ENCODE measurements at regions of chr2 and their contacts with region 1.

Region 1: GRCh38 chr2:64052468-64053241 is 33.4 kb upstream of the VPS54 start:
- DNase-seq: no peak
- H3K4me3 Mint-ChIP-seq: no peak overlapping the region
- H3K27ac Mint-ChIP-seq: no peak overlapping the region
- H3K4me1 Mint-ChIP-seq: peaks cover 40% of the 10 kb centered on the region
- H3K27me3 Mint-ChIP-seq: no peaks in the 10 kb centered on the region

Region 2: DNA sequence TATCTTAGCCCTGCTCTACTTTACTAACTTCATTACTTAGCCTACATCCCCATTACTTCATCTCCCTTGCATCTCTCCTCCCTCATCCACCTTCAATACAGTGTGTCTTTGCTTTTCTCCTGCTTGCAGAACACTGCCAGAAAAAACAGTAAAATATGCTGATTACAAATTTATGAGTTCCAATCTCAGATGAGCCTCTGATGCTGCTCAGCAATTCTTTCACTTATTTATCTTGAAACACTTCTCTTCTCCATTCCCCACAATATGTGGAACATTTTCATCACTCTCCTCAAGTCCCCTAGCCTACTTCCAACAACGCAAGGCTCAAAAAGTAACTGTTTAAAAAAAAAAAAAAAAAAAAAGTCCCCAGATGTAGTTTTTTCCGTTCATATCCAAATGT is 40.5 kb before region 1 on chr2:
- intact Hi-C with region 1: no loop called
- DNase-seq: no peak
- H3K4me3 Mint-ChIP-seq: peak overlapping the region; percentile 23
- H3K27ac Mint-ChIP-seq: peak overlapping the region; percentile 80
- H3K4me1 Mint-ChIP-seq: peaks cover 44% of the 10 kb centered on the region
- H3K27me3 Mint-ChIP-seq: no peaks in the 10 kb centered on the region

Region 3: DNA sequence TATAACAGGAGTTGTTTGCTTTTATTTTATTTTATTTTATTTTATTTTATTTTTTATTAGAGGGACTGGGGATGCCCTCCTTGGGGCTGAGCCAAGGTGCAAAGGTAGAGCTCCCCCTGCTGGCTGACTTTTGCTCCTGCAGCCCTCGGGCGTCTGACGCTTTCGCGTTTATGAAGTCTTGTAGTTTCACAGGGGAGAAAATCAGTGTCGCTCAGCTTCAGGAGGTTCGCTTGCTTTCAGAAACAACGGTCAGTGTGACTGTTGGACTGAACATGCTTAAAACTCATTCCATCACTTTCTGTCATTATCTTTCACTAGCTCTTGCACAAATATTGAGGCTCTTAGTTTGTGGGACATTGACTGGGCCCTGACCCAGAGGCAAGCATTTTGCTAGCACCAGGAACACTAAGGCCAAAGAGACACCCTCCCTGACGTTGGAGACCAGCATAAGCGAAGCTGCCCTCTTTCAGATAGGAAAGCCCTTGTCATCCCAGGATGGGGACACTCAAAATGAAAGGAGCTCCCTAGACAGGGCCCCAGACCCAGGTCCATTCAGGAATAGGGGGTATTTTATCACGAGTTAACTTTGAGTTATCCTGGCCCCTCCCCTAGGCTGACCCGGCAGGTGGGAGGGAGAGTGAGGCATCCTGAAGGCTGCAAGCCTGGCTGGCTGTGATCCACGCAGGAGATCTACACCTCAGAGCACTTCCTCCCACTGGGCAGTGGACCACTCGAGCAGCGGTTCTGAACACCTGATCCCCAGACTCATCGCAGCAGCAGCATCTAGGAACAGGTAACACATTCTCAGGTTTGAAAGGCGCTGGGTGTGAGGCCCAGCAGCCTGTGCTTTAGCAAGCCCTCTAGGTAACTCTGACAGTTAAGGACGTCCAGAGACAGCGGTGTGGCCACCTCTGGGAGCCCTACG is 435.7 kb after region 1 on chr2:
- intact Hi-C with region 1: loop called (anchors 1 kb)
- DNase-seq: peak; percentile 53
- H3K4me3 Mint-ChIP-seq: no peak overlapping the region
- H3K27ac Mint-ChIP-seq: no peak overlapping the region
- H3K4me1 Mint-ChIP-seq: peaks cover 8% of the 10 kb centered on the region
- H3K27me3 Mint-ChIP-seq: peaks cover 24% of the 10 kb centered on the region

Region 4: GRCh38 chr2:64562148-64562784 is 509.6 kb after region 1 on chr2:
- intact Hi-C with region 1: loop called (anchors 1 kb)
- DNase-seq: no peak
- H3K4me3 Mint-ChIP-seq: no peak overlapping the region
- H3K27ac Mint-ChIP-seq: no peak overlapping the region
- H3K4me1 Mint-ChIP-seq: peaks cover 36% of the 10 kb centered on the region
- H3K27me3 Mint-ChIP-seq: no peaks in the 10 kb centered on the region

Region 5: DNA sequence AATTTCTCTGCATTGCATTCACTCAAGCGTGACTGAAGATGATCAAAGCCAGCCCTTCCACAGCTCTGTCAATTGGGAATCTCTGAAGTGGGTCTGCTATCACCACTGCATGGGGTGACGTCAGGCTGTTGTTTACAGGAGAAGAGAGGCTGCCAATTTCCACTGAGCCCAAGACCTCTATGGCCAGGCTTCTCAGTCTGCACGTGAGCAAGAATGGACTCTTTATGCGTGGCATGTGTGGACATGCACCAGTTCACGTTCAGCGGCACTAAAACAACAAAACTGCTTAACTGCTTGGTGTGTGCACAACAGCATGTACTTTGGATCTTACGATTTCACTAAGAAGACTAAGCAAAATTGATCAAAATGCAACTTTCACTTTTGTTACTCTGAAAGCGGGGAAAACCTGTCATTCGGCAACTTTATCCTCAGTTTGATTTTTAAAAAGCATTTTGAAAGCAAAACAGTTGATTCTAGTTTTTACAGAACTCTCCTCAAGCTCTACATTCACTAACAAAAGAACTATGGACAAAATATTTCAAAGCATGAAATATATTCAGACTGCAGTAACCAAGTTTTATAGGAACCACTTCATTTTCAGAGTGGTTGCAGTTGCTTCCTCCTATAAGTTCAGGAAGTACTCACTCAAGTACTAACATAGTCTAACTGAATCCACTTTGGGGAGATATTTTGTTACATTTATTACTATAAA is 678.1 kb after region 1 on chr2:
- intact Hi-C with region 1: no loop called
- DNase-seq: peak; percentile 35
- H3K4me3 Mint-ChIP-seq: peak overlapping the region; percentile 85
- H3K27ac Mint-ChIP-seq: peak overlapping the region; percentile 89
- H3K4me1 Mint-ChIP-seq: peaks cover 77% of the 10 kb centered on the region
- H3K27me3 Mint-ChIP-seq: no peaks in the 10 kb centered on the region

Region 6: DNA sequence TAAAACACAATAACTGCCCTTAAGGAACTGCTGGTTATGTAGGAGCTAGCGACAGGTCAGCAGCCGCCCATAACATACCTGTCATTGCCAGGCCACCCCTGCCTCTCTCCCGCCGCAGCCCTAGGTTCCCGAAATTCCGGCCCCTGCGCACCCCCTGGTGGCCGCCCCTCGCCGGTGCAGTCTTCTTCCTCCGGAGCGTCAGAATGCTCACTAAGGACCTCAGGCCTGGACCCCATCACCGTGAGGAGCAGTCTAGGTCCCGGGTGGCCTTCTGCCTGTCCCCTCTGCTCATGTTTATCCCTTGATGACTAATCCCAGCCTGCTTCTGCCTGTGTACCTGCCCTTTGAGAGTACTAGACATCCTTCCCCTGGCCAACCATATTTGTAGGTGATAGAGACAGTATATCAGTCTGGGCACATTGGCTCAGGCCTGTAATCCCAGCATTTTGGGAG is 820.8 kb after region 1 on chr2:
- intact Hi-C with region 1: loop called (anchors 10 kb)
- DNase-seq: peak; percentile 74
- H3K4me3 Mint-ChIP-seq: no peak overlapping the region
- H3K27ac Mint-ChIP-seq: no peak overlapping the region
- H3K4me1 Mint-ChIP-seq: peaks cover 8% of the 10 kb centered on the region
- H3K27me3 Mint-ChIP-seq: peaks cover 26% of the 10 kb centered on the region

Measured in activated T-helper 1 cell treated with anti-CD3 and anti-CD28 coated beads, Interleukin-12 subunit alpha, Interleukin-12 subunit beta, Interleukin-2, Interleukin-4 antibody, amounts not matched to agents 30 ng/mL and 10 ng/mL and 1 ng/mL, durations not matched to agents 14 hours and 24 hours and 36 hours (primary cell).